Right cardiac atrium (tissue), 5 donors: ENCODE measurements at regions of chr4 and their contacts with region 1.

Region 1: DNA sequence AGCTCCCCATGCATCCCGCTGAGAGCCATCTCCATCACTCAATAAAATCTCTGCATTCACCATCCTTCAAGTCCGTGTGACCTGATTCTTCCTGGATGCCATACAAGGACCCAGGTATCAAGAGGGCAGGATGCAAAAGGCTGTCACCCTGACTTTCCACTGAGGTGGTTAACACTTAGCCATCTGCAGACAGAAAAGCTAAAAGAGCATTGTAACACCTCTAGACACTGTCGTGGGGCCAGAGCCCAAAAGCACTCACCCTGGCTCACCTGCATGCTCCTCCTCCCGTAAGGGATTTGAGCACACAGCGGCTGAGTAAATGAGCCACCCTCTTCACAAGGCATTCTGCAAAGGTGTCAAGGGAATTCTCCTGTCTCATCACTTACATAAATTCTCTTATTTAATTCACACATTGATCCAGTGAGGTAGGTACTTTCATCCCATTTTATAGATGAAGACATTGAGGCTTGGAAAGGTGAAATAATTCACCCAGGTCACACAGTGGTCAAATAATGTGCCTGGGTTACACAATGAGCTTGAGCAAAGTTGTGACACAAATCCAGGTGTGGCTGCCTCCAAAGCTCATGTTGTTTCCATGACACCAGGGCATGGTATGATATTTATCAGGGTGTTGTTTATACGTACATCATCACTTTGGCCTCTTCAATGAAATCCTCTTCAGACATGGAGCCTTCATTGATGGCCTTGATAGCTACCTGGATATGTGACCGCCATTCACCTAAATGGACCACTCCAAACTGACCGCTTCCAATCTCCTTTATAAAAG is 48.0 kb downstream of the TXK start:
- DNase-seq: no peak
- ATAC-seq: no peak
- H3K4me3 ChIP-seq: no peak overlapping the region
- H3K27ac ChIP-seq: no peak overlapping the region
- H3K4me1 ChIP-seq: no peaks in the 10 kb centered on the region
- H3K27me3 ChIP-seq: no peaks in the 10 kb centered on the region

Region 2: GRCh38 chr4:48002267-48002666 is 83.7 kb before region 1 on chr4:
- intact Hi-C with region 1: loop called in 2 of 4 experiments (anchors 5 kb)
- DNase-seq: no peak
- ATAC-seq: no peak
- H3K4me3 ChIP-seq: no peak overlapping the region
- H3K27ac ChIP-seq: no peak overlapping the region
- H3K4me1 ChIP-seq: no peaks in the 10 kb centered on the region
- H3K27me3 ChIP-seq: no peaks in the 10 kb centered on the region

Region 3: DNA sequence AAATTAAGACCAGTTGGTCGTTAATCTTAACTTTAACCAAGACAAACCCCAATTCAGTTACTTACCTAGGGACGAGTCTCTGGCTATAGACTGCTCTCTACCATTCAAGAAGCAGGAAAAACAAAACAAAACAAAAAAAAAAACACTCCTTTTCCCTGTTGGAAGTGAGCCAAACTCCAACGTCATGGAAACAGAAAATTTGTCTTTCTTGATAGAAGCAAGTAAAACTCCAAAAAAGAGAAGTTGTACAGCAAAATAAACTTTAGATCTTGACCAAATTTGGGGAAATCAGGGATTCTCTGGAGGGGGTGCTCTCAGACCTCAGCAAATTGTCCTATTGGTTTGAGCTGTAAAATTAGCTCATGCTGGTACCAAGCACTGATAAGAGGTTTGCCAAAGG is 73.2 kb before region 1 on chr4:
- intact Hi-C with region 1: loop called in 1 of 4 experiments (anchors 5 kb)
- DNase-seq: no peak
- ATAC-seq: no peak
- H3K4me3 ChIP-seq: no peak overlapping the region
- H3K27ac ChIP-seq: no peak overlapping the region
- H3K4me1 ChIP-seq: no peaks in the 10 kb centered on the region
- H3K27me3 ChIP-seq: no peaks in the 10 kb centered on the region